ENCODE measurements at regions of chr3 and their contacts with region 1.

Region 1: DNA sequence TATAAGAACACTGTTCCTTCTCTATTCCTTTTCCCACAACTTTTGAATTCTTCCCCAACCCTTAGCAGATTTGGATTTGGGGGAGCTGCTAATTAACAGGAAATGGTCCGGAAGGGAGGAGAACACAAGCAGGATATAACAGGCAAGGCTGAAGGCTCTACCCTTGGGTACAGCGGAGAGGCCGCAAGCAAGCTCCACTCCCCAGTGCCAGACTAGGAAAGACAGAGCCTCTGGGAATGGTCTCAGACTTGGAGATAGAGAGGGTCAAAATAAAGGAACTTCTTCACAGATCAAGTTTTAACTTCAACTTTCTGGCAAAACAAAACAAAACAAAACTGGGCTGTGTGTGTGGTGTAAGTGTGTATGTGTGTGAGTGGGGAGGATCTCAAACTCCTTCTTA is 160.9 kb downstream of the TP63 start:
- DNase-seq: peak; percentile 59
- H3K4me3 Mint-ChIP-seq: peak overlapping the region; percentile 76
- H3K27ac Mint-ChIP-seq: peak overlapping the region; percentile 99
- H3K4me1 Mint-ChIP-seq: peaks cover 19% of the 10 kb centered on the region
- H3K27me3 Mint-ChIP-seq: no peaks in the 10 kb centered on the region
- CTCF ChIP-seq: no peak

Region 2: DNA sequence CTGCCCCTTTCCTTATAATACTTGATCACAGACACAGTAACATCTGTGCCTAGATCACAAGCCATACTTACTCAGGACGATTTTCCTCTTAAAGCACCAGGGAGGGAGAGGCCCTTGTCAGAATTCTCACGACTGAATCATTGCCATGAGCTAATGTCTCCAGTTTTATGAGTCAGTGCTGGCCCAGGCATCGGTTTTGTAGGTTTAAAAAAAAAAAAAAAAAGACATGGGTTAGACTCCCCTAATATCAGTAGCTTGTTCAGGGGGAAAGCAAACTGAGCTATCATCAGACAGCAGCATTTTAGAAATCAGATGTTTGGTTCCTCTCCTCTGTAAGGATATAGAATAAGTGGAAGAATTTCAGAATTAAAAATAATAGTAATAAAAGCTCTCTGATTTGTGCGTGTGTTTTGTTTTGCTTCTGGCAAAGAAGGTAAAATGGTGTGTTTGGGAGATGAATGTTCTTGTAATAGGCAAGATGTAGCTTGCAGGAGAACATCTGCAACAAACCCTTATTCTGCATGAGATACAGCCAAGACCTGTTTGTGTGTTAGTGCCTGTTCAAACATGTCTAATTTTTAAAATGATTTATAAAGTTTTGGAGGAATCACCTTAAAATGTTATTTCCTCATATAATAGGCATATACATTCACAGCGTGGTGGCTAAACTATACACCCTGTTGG is 32.7 kb after region 1 on chr3:
- CTCF ChIA-PET with region 1: interaction called, 6 read pairs
- POLR2A ChIA-PET with region 1: interaction called, 48 read pairs
- intact Hi-C with region 1: no loop called
- DNase-seq: peak; percentile 96
- H3K4me3 Mint-ChIP-seq: peak overlapping the region; percentile 42
- H3K27ac Mint-ChIP-seq: peak overlapping the region; percentile 83
- H3K4me1 Mint-ChIP-seq: peaks cover 31% of the 10 kb centered on the region
- H3K27me3 Mint-ChIP-seq: no peaks in the 10 kb centered on the region
- CTCF ChIP-seq: no peak

Measured in MCF 10A (cell line).